Motor neuron (in vitro differentiated cells): ENCODE measurements at regions of chr2 and their contacts with region 1.

Region 1: DNA sequence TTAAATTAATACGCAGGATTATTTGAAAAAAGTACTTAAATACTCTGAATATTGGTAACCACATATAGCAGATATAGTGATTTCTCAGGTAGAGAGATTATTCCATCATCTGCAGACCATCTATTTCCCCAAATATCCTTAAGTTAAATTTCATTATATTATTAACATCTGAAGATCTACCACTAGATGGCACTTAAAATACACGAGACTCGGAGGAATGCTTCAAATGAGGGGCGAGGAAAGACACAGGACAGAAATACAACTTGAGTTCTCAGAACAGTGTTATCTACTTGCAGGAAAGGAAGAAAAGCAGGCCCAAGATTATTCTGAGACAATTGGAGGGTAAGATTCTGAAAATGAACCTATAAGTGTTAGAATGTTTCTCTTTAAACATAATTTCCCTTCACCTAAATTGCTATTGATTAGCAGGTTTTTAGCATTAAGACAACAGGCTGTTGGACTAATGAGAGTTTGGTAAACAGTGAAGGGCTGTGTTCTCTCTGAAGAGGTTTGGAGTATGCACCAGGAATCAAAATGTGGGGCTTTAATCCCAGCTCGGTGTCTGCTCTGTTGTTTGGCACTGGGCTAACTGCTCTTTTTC is 76.9 kb upstream of the GCFC2 start:
- ATAC-seq: peak in 5 of 8 experiments; percentile 37 to 55 (median 45)
- H3K4me3 ChIP-seq: no peak overlapping the region
- H3K27ac ChIP-seq: no peak overlapping the region
- H3K4me1 ChIP-seq: peaks cover 0 to 2% of the 10 kb centered on the region in 2 donors

Region 2: DNA sequence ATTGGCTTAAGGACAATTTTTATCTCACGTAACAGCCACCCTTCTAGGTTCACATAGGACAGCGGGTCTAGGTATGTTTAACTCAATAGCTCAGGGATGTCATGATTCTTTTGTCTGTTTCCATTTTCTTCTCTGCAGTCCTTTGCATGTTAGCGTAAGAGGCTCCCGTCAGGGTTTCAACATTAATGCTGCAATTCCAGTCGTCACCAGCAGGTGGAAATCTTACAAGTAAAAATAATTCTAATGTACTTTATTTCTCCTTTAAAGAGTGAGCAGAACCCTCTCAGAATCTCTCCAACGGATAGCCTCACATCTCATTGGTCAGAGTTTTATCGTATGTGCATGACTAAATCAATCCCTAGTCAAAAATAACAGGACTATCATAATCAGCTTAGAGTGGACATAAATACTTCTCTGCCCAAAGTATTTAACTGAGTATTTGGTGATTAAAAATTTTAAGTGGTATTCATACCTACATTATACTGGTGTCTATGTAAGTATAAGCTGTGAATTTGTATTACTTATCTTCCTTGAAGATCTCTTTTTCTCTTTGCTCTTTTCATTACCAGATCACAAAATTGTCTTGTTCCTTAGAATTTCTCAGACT is 410.3 kb after region 1 on chr2:
- in situ Hi-C with region 1: loop called in 2 of 9 experiments (anchors 25 kb)
- ATAC-seq: peak in 3 of 8 experiments; percentile 62 to 82 (median 81)
- H3K4me3 ChIP-seq: no peak overlapping the region
- H3K27ac ChIP-seq: no peak overlapping the region
- H3K4me1 ChIP-seq: no peaks in the 10 kb centered on the region